Uterus (tissue), 4 donors: ENCODE measurements at regions of chr20 and their contacts with region 1.

Region 1: DNA sequence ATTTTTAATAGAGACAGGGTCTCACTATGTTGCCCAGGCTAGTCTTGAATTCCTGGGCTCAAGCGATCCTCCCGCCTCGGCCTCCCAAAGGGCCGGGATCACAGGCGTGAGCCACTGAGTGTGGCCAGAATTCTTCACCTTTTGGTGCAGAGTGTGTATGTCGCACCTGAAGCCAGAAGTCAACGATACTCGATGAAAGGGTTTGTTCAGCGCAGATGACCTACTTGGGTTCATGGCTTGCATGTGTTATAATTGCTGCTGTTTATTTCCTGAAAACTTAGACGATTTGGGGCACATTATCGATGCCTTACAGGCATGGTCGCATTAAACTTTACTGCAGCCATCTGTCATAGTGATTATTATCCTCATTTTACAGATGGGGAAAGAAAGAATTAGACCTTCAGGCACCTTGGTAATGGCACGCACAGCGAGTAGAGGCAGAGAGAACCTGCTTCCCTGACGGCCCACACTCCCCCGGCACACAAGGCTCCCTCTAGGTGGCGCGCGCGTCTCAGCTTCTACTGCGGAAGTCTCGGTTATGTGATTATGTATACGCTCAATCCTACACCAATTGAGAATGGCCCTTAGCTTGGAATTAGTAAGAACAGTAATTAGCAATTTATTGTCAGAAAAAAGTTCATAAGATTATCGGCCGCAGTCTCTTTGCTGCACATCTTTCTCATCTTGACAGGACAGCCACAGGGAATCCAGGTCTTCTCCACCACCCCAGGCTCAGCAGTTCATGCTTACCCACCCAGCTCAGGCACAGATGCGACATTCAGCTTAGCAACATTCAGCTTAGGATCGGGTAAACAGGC is 212.8 kb upstream of the PROKR2 start:
- DNase-seq: peak; percentile 60 to 63
- H3K4me3 ChIP-seq: no peak overlapping the region
- H3K27ac ChIP-seq: no peak overlapping the region
- H3K4me1 ChIP-seq: no peaks in the 10 kb centered on the region
- H3K27me3 ChIP-seq: no peaks in the 10 kb centered on the region
- CTCF ChIP-seq: peak; percentile 49 to 62 (median 54)
- POLR2A ChIP-seq: no peak

Region 2: GRCh38 chr20:5078399-5078958 is 451.1 kb before region 1 on chr20:
- intact Hi-C with region 1: no loop called
- DNase-seq: peak in 1 of 2 donors; percentile 37
- H3K4me3 ChIP-seq: no peak overlapping the region
- H3K27ac ChIP-seq: no peak overlapping the region
- H3K4me1 ChIP-seq: no peaks in the 10 kb centered on the region
- H3K27me3 ChIP-seq: no peaks in the 10 kb centered on the region
- CTCF ChIP-seq: no peak
- POLR2A ChIP-seq: no peak

Region 3: DNA sequence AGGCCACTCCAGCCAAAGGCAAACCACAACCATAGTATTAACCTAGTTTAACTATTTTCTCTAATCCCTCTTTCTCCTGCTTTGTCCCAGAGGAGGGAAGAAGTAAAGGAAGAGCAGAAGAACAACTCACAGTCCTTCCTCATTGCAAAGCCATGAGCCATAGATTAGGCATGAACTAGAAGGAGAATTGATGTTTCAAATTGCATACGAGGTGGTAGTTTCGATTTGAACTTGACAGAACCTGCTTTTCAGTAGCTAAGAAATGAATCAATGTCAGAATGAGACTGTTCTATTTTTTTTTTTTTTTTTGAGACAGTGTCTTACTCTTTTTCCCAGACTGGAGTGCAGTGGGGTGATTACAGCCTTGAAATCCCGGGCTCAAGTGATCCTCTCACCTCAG is 261.1 kb before region 1 on chr20:
- intact Hi-C with region 1: no loop called
- DNase-seq: no peak
- H3K4me3 ChIP-seq: no peak overlapping the region
- H3K27ac ChIP-seq: no peak overlapping the region
- H3K4me1 ChIP-seq: no peaks in the 10 kb centered on the region
- H3K27me3 ChIP-seq: no peaks in the 10 kb centered on the region
- CTCF ChIP-seq: no peak
- POLR2A ChIP-seq: no peak

Region 4: DNA sequence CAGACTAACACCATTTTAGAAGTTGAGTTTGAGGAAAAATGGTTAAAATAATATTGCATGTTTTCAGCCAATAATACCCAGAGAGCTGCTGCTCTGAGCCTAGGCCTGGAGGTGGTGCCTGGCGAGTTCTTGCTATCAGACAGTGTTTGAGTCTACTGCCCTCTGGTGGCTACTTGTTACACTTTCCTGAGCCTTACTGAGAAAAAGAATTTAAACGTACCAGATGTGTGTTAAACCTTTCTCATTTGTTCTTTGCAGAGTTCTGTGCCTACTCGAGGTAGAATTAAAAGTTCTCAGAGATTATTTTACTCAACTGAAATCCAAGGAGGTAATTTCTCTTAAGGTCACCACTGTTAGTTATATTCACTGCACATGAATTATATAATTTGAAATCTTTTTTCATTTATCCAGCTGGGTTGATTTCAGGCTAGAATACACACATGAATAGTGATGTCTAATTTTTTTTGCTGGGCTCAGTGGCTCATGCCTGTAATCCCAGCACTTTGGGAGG is 258.9 kb after region 1 on chr20:
- intact Hi-C with region 1: loop called (anchors 5 kb)
- DNase-seq: peak; percentile 55 to 81
- H3K4me3 ChIP-seq: no peak overlapping the region
- H3K27ac ChIP-seq: no peak overlapping the region
- H3K4me1 ChIP-seq: no peaks in the 10 kb centered on the region
- H3K27me3 ChIP-seq: no peaks in the 10 kb centered on the region
- CTCF ChIP-seq: peak; percentile 84 to 90 (median 86)
- POLR2A ChIP-seq: no peak

Region 5: GRCh38 chr20:6074145-6074561 is 544.6 kb after region 1 on chr20:
- intact Hi-C with region 1: loop called (anchors 10 kb)
- DNase-seq: no peak
- H3K4me3 ChIP-seq: no peak overlapping the region
- H3K27ac ChIP-seq: no peak overlapping the region
- H3K4me1 ChIP-seq: no peaks in the 10 kb centered on the region
- H3K27me3 ChIP-seq: no peaks in the 10 kb centered on the region
- CTCF ChIP-seq: no peak
- POLR2A ChIP-seq: no peak